Activated CD4-positive, alpha-beta T cell treated with anti-CD3 and anti-CD28 coated beads for 36 hours (primary cell): ENCODE measurements at regions of chr14 and their contacts with region 1.

Region 1: DNA sequence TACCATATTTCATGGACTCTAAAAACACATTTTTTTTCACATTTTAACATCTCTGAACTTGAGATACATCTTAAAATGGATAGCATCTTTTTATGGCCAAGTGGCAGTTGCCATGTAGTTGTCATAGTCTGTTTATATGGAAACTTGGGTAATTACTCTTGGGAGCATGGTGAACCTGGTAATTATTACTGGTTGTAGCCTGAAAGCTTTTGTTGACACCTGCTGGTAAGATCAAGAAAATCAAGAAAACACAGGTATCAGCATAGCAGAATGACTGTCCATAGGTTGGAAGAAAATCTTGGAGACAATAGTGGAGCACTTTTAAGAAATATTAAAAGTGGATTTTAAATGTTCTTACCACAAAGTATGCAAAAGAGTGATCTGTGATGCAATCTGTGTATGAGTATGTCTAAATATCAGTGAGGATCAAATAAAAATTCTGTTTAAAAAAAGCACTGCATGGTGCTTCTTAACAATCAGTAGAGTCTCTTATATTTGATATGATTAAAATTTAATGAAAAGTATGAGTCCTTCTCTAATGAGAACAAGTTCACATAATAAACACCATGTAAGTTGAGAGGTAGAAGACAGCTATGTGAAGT is 44.2 kb downstream of the TTC8 start:
- DNase-seq: no peak
- ATAC-seq: no peak
- H3K4me3 Mint-ChIP-seq: no peak overlapping the region
- H3K27ac Mint-ChIP-seq: no peak overlapping the region
- H3K4me1 Mint-ChIP-seq: no peaks in the 10 kb centered on the region
- H3K27me3 Mint-ChIP-seq: no peaks in the 10 kb centered on the region

Region 2: DNA sequence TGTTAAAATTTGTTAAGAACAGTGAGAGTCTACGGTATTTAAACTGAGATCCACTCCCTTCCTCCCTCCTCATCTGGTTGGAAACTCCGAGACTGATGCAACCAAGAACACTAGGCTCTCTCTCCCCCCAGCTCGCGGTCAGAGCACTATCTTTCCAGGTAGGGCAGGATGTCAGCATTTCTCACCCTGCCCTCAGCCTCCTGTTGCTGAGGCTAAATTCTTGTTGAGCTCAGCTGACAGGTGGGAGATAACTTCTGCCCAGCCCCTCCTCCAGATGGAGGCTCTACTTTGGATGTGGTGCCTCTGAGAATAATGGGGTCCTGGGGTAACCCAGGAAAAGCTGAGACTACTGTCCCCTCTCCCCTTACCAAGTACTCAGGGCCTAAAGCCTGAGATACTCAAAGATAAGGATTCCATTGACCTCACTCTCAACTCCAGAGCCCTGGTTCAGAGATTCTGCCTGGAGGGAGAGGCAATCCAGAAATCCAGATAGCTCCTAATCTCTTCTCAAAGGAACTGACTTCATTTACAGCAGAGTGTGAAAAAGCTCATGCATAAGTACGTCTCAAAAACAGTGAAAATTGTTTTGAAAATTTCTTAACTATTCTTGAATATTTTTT is 186.1 kb before region 1 on chr14:
- CTCF ChIA-PET with region 1: no interaction called
- POLR2A ChIA-PET with region 1: no interaction called
- intact Hi-C with region 1: loop called in 1 of 2 experiments (anchors 5 kb)
- DNase-seq: peak; percentile 10
- ATAC-seq: peak; percentile 26
- H3K4me3 Mint-ChIP-seq: no peak overlapping the region
- H3K27ac Mint-ChIP-seq: no peak overlapping the region
- H3K4me1 Mint-ChIP-seq: no peaks in the 10 kb centered on the region
- H3K27me3 Mint-ChIP-seq: no peaks in the 10 kb centered on the region